ENCODE measurements at regions of chr14 and their contacts with region 1.

Region 1: DNA sequence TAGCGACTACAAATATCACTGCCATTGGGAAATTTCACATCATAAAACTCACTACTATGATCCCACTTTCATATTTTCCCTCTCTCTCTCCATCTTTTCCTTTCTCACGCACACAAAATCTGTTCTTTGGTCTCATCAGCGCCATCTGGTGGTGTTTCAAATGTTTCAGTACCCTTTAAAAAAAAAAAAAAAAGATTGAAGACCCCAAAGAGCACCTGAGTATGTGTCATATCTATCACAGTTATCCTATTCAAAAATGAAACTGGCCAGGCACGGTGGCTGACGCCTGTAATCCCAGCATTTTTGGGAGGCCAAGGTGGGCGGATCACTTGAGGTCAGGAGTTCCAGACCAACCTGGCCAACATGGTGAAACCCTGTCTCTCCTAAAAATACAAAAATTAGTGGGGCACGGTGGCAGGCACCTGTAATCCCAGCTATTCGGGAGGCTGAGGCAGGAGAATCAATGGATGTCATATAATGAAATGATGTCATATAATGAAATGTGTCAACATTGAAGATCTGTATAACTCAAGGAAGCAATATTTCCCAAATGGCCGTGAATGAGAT is 72.4 kb downstream of the TTC9 start:
- DNase-seq: peak; percentile 79
- H3K4me3 ChIP-seq: no peak overlapping the region
- H3K27ac ChIP-seq: no peak overlapping the region
- H3K4me1 ChIP-seq: peaks cover 14% of the 10 kb centered on the region
- CTCF ChIP-seq: peak; percentile 90

Region 2: GRCh38 chr14:70600382-70601157 is 113.6 kb before region 1 on chr14 and contains the start of gene MED6:
- CTCF ChIA-PET with region 1: interaction called, 3 read pairs
- POLR2A ChIA-PET with region 1: interaction called, 5 read pairs
- intact Hi-C with region 1: loop called (anchors 5 kb)
- DNase-seq: peak; percentile 94
- H3K4me3 ChIP-seq: peak within 1 kb of the TSS; percentile 97
- H3K27ac ChIP-seq: peak within 1 kb of the TSS; percentile 34
- H3K4me1 ChIP-seq: peaks cover 34% of the 10 kb centered on the region
- CTCF ChIP-seq: no peak
- total RNA-seq, gene MED6: 28.4 and 28.8 TPM in 2 replicates

Region 3: GRCh38 chr14:70622111-70622712 is 91.9 kb before region 1 on chr14:
- CTCF ChIA-PET with region 1: no interaction called
- POLR2A ChIA-PET with region 1: interaction called, 3 read pairs
- intact Hi-C with region 1: loop called (anchors 1 kb)
- DNase-seq: peak; percentile 74
- H3K4me3 ChIP-seq: no peak overlapping the region
- H3K27ac ChIP-seq: no peak overlapping the region
- H3K4me1 ChIP-seq: no peaks in the 10 kb centered on the region
- CTCF ChIP-seq: peak; percentile 91